HCT116 (cell line): ENCODE measurements at regions of chr3 and their contacts with region 1.

Region 1: GRCh38 chr3:31785286-31785685 is 195.8 kb downstream of the OSBPL10 start:
- DNase-seq: no peak
- ATAC-seq: no peak
- H3K4me3 ChIP-seq: no peak overlapping the region
- H3K27ac ChIP-seq: no peak overlapping the region
- H3K4me1 ChIP-seq: no peaks in the 10 kb centered on the region
- H3K27me3 ChIP-seq: no peaks in the 10 kb centered on the region
- CTCF ChIP-seq: no peak
- POLR2A ChIP-seq: no peak
- RAD21 ChIP-seq: no peak

Region 2: GRCh38 chr3:31345581-31345980 is 439.7 kb before region 1 on chr3:
- CTCF ChIA-PET with region 1: no interaction called
- POLR2A ChIA-PET with region 1: no interaction called
- RAD21 ChIA-PET with region 1: no interaction called
- intact Hi-C with region 1: loop called (anchors 5 kb)
- DNase-seq: no peak
- ATAC-seq: no peak
- H3K4me3 ChIP-seq: no peak overlapping the region
- H3K27ac ChIP-seq: no peak overlapping the region
- H3K4me1 ChIP-seq: no peaks in the 10 kb centered on the region
- H3K27me3 ChIP-seq: no peaks in the 10 kb centered on the region
- CTCF ChIP-seq: no peak
- POLR2A ChIP-seq: no peak
- RAD21 ChIP-seq: no peak

Region 3: GRCh38 chr3:31892916-31893573 is 107.8 kb after region 1 on chr3:
- CTCF ChIA-PET with region 1: no interaction called
- POLR2A ChIA-PET with region 1: no interaction called
- RAD21 ChIA-PET with region 1: no interaction called
- intact Hi-C with region 1: no loop called
- DNase-seq: no peak
- ATAC-seq: no peak
- H3K4me3 ChIP-seq: no peak overlapping the region
- H3K27ac ChIP-seq: no peak overlapping the region
- H3K4me1 ChIP-seq: no peaks in the 10 kb centered on the region
- H3K27me3 ChIP-seq: no peaks in the 10 kb centered on the region
- CTCF ChIP-seq: no peak
- POLR2A ChIP-seq: no peak
- RAD21 ChIP-seq: no peak